Activated naive CD4-positive, alpha-beta T cell treated with anti-CD3 and anti-CD28 coated beads for 36 hours (primary cell): ENCODE measurements at regions of chr7 and their contacts with region 1.

Region 1: DNA sequence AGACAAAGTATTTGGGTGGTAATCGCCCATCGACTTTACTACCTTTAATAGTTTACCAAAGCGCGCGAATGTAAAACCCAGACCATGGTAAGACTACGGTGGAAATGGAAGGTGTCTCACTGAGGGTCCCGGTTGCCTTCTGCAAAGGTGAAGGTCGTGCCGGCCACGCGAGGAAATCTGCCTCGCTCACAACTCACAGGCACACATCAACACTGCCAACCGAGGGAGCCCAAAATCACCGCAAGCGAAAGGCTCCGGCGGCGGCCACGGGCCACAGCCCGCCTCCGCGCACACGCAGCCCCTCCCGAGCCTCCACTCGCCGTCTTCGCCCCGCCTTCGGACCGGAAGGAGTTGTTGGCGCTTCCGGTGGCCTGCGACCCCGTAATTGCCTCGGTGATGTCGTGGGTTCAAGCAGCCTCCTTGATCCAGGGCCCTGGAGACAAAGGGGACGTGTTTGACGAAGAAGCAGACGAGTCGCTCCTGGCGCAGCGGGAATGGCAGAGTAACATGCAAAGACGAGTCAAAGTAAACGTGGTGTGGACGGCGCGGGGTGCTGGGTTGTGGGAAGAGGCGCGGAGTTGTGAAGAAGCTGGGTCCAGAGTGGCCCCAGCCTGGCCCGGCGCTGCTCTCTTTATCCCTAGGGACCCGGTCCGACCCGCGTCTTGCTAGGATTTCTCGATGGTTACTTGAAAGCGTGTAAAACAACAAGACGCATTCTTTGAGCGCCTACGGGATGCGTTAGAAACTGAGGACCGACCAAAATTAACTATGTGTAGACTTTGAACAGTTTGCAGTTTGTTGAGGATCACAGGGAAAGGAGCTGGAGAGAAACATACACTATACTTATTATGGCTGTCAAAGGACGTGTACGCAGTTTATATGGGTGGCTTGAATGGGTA is at the start of gene YAE1:
- DNase-seq: peak; percentile 86
- H3K4me3 Mint-ChIP-seq: peak within 1 kb of the TSS; percentile 97
- H3K27ac Mint-ChIP-seq: peak within 1 kb of the TSS; percentile 95
- H3K4me1 Mint-ChIP-seq: peaks cover 18% of the 10 kb centered on the region
- H3K27me3 Mint-ChIP-seq: no peaks in the 10 kb centered on the region
- total RNA-seq, gene YAE1: 4.6 to 5.5 TPM

Region 2: DNA sequence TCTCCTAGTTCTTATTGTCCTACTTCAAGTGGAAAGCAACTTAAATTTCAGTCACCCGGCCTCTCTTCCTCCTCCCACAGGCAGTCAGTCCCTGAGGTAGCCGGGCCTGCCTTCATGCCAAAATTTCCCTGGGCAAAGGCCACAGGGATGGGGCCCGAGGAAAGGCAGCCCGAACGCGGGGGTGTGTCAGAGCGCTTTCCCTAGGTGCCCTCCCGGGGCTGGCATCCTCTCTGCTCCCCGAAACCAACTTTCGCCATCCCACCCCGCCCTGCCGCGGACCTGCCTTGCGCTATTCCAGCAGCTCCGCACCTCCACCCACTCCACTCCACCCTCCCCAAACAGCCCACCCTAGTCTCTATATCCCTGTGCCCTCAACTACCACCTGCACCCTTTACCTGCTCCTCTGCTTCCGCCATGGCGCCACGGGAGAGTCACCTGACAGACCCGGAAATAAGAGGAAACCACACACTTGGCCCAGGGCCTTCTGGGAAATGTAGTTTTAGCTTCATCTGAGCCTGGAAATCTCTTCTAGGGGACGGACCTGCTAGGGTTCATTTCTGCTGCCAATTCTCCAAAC is 657.4 kb before region 1 on chr7 and contains the start of gene VPS41:
- CTCF ChIA-PET with region 1: no interaction called
- intact Hi-C with region 1: loop called (anchors 5 kb)
- DNase-seq: peak; percentile 87
- H3K4me3 Mint-ChIP-seq: peak within 1 kb of the TSS; percentile 91
- H3K27ac Mint-ChIP-seq: peak within 1 kb of the TSS; percentile 72
- H3K4me1 Mint-ChIP-seq: peaks cover 40% of the 10 kb centered on the region
- H3K27me3 Mint-ChIP-seq: no peaks in the 10 kb centered on the region
- total RNA-seq, gene VPS41: 51.1 to 57.8 TPM

Region 3: DNA sequence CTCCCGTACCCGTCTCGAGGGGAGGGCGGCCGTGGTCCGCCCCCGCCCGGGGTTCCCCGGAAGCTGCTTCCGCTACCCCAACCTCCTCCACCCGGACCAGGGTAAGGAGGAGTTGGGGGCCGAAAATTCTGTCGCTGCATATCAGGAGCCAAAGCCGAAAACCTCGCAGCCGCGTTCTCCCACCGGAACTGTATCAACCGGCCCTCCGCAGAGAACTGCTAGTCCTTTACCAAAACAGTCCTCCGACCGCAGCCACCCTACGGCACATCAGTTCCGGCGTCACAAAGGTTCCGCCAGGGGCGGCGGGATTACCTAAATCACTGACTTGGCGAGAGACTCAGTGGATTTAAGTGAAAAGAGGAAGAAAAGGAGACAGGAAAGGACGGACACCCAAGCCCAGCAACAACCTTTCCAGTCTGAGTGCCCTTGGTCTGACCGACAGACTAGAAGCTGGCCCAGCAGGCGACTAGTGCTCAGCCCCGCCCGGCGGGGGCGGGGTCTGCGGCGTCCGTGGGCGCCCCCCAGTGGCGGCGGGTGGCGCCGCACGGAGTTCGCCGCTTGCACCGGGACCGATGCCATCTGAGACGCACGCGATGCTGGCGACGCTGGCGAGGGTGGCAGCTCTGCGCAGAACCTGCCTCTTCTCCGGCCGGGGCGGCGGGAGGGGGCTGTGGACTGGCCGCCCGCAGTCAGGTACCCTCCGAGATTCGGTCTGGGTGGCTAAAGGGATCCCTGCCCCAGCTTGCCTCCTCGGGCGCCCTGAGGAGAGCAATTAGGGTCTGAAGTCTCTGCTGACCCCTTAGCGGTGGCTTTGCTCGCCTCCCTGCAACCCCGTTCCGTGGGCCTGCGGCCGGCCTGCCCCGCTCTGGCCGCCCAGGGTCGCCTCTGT is 568.4 kb after region 1 on chr7 and contains the starts of genes MPLKIP and SUGCT:
- CTCF ChIA-PET with region 1: no interaction called
- intact Hi-C with region 1: loop called (anchors 1 kb)
- DNase-seq: peak; percentile 87
- H3K4me3 Mint-ChIP-seq: peak within 1 kb of the TSS; percentile 93
- H3K27ac Mint-ChIP-seq: peak within 1 kb of the TSS; percentile 96
- H3K4me1 Mint-ChIP-seq: peaks cover 26% of the 10 kb centered on the region
- H3K27me3 Mint-ChIP-seq: no peaks in the 10 kb centered on the region
- total RNA-seq, gene MPLKIP: 38.1 to 38.8 TPM
- total RNA-seq, gene SUGCT: 0.81 to 1.2 TPM